Posterior cingulate gyrus (tissue), 11 donors: ENCODE measurements at regions of chr15 and their contacts with region 1.

Region 1: GRCh38 chr15:72473614-72474465 is at the start of gene ARIH1:
- DNase-seq: peak; percentile 97 to 100 (median 98)

Region 2: DNA sequence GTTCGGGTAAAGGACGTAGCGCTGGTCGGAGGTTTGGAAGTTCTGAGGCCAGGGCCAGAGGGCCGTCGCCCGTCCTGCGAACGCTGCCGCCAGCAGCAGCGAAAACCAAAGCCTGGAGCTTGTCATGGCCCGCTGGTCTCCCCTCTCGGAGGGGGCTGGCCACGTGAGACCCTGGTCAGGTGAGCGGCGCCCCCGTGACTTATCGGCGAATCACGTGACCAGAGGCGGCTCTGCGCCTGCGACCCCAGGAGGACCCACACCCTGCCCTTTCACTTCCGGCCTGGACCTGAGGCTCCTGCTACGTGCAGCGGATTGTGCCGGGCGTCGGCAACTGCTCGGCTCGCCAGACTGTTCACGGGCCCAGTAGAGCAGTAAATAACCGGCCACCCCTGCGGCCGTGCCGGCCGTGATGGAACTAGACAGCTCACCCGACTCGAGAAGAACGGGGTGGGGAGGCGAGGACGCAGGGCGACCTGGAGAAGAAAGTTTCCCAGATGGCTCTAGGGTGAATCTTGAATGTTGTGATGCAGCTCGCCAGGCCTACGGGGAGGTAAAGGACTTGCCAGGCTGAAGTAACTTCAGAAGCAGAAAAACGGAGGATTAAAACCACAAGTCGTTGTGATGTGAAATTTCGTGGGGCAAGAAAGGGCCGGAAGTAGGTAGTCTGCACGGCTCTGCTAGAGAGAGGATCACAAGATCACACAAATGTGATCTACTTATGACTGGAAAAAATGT is 97.8 kb before region 1 on chr15 and contains the start of gene HEXA:
- intact Hi-C with region 1: loop called (anchors 2 kb)
- DNase-seq: peak; percentile 90 to 100 (median 96)

Region 3: GRCh38 chr15:72585476-72586082 is 111.7 kb after region 1 on chr15:
- intact Hi-C with region 1: loop called (anchors 10 kb)
- DNase-seq: no peak